Psoas muscle (tissue), 8 donors: ENCODE measurements at regions of chr19 and their contacts with region 1.

Region 1: DNA sequence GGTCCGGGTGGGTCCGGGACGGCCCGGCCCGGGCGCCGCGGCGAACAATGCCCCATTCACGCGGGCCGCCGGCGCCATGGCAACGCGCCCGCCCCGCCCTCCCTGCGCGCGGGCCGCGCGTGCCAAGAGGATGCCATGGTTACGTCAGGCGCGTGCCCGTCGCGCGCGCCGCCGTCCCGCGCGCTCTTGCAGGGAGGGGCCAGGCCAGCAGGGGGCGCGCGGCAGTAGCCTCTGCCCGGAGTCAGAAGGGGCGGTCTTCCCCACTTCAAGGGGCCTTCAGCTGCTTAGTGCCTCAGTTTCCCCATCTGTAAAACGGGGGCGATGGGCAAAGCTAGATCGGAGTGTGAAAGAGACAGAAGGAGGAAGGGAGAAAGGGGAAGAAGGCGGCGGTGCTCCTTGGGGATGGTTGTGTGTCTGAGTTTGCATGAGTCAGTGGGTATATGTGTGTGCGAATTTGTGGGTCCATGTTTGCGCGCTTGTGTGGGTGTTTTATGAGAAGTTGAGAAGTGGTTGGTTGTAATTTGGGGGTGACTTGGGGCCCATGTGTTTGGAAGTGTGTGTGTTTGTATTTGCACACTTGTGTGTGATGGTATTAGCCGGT is 11.6 kb upstream of the NFIX start:
- DNase-seq: peak; percentile 83 to 91
- ATAC-seq: peak; percentile 74 to 84 (median 77)
- H3K4me3 ChIP-seq: peak overlapping the region; percentile 56
- H3K27ac ChIP-seq: no peak overlapping the region
- H3K4me1 ChIP-seq: peaks cover 16% of the 10 kb centered on the region
- H3K27me3 ChIP-seq: no peaks in the 10 kb centered on the region
- CTCF ChIP-seq: peak; percentile 97

Region 2: GRCh38 chr19:13007292-13008045 is 23.8 kb after region 1 on chr19:
- intact Hi-C with region 1: loop called in 1 of 2 experiments (anchors 1 kb)
- DNase-seq: peak; percentile 75 to 90
- ATAC-seq: peak; percentile 10 to 48 (median 29)
- H3K4me3 ChIP-seq: peak overlapping the region; percentile 57
- H3K27ac ChIP-seq: peak overlapping the region; percentile 99
- H3K4me1 ChIP-seq: peaks cover 86% of the 10 kb centered on the region
- H3K27me3 ChIP-seq: no peaks in the 10 kb centered on the region
- CTCF ChIP-seq: no peak

Region 3: GRCh38 chr19:13033819-13034611 is 50.4 kb after region 1 on chr19:
- intact Hi-C with region 1: loop called in 1 of 2 experiments (anchors 2 kb)
- DNase-seq: peak; percentile 85 to 94
- ATAC-seq: peak; percentile 61 to 66 (median 64)
- H3K4me3 ChIP-seq: no peak overlapping the region
- H3K27ac ChIP-seq: peak overlapping the region; percentile 99
- H3K4me1 ChIP-seq: peaks cover 98% of the 10 kb centered on the region
- H3K27me3 ChIP-seq: no peaks in the 10 kb centered on the region
- CTCF ChIP-seq: peak; percentile 86

Region 4: DNA sequence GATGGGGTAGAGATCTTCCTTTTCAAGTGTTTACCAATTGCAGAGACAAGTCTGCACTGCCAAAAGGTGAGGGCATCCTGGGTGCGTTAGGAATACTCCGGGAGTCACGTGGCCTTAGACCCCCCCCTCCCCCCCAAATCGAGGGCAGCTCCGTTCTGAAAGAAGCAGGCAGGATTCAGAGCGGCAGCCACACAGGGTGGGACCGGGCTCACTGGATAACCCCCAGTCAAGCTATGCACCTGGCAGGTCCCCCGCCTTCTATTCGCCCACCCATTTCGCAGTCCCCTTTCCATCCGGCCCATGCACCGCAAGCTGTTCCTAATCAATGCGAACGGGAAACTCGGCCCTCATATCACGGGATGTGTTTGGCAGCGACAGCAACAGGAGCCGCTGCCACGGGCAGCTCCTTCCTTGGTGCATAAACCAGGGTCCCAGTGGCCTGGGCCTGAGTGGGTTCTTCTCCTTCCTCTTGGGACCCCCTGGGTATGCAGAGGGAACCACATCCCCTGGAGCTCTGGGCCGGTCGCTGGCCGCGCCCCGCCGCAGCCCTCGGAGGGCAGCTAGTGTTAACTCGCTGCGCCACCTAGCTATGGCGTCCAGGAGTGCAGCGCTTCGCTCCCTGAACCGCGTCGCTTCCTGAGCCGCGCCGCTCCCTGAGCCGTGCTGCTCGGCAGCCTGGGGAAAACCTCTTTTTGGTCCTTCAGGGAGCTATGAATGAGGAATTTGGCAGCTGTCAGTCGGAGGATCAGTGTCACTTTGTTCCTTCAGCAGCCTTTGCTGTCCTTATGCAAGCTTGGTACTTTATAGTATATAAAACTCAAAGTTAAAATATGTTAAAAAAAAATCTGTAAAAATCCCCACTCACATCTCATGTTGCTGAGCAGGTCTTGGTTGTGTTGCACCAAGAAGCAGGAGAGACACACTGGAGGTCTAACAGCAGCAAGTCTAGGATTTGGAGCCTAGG is 77.6 kb after region 1 on chr19:
- intact Hi-C with region 1: loop called (anchors 2 kb)
- DNase-seq: peak; percentile 87 to 93
- ATAC-seq: peak; percentile 62 to 73 (median 66)
- H3K4me3 ChIP-seq: peak overlapping the region; percentile 52
- H3K27ac ChIP-seq: peak overlapping the region; percentile 81
- H3K4me1 ChIP-seq: peaks cover 98% of the 10 kb centered on the region
- H3K27me3 ChIP-seq: no peaks in the 10 kb centered on the region
- CTCF ChIP-seq: peak; percentile 98

Region 5: DNA sequence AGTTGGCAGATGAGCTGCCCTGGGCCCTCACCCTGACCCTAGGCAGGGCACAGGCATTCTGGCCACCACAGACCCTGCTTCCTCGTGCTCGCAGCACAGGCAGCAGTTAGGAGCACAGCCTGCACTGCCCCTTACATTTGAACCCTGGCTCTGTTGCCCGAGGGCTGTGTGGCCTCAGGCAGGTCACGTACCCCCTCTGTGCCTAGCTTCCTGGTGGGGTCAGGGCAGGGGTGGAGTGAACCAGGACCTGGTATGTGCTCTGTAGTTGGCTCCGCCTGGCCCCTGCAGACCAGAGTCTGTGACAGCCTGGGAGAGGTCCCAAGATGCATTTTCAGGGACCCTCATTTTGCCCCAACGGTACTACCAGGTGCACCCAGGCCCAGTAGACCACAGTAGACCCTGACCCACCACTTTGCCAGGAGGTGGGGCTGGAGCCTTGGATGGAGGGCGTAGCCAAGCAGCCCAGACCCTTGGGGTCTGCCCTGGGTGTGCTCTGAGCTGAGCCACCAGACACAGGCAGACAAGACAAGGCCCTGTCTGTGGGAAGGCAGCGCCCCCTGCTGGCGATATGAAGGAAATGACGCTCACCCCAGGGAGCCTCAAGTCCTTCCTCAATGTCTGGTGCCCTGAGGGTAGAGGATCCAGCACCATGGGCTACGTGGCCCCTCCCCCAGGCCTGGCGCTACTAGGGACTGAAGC is 109.9 kb after region 1 on chr19:
- intact Hi-C with region 1: loop called (anchors 1 to 2 kb)
- DNase-seq: peak; percentile 87 to 91
- ATAC-seq: peak; percentile 76 to 83 (median 80)
- H3K4me3 ChIP-seq: no peak overlapping the region
- H3K27ac ChIP-seq: peak overlapping the region; percentile 74
- H3K4me1 ChIP-seq: peaks cover 25% of the 10 kb centered on the region
- H3K27me3 ChIP-seq: no peaks in the 10 kb centered on the region
- CTCF ChIP-seq: peak; percentile 99

Region 6: GRCh38 chr19:13262450-13262849 is 278.8 kb after region 1 on chr19:
- intact Hi-C with region 1: loop called (anchors 2 kb)
- DNase-seq: no peak
- ATAC-seq: peak; percentile 41 to 74 (median 52)
- H3K4me3 ChIP-seq: no peak overlapping the region
- H3K27ac ChIP-seq: no peak overlapping the region
- H3K4me1 ChIP-seq: peaks cover 9% of the 10 kb centered on the region
- H3K27me3 ChIP-seq: peaks cover 0 to under 1% (median 0%) of the 10 kb centered on the region in 3 donors
- CTCF ChIP-seq: peak; percentile 60